Calu3 (cell line): ENCODE measurements at regions of chr6 and their contacts with region 1.

Region 1: GRCh38 chr6:22972771-22973170 is 403.4 kb downstream of the HDGFL1 start:
- DNase-seq: no peak
- H3K4me3 Mint-ChIP-seq: no peak overlapping the region
- H3K27ac Mint-ChIP-seq: no peak overlapping the region
- H3K4me1 Mint-ChIP-seq: no peaks in the 10 kb centered on the region
- H3K27me3 Mint-ChIP-seq: no peaks in the 10 kb centered on the region
- CTCF ChIP-seq: no peak

Region 2: GRCh38 chr6:22880686-22881433 is 91.9 kb before region 1 on chr6:
- CTCF ChIA-PET with region 1: no interaction called
- intact Hi-C with region 1: no loop called
- DNase-seq: peak; percentile 51
- H3K4me3 Mint-ChIP-seq: peak overlapping the region; percentile 24
- H3K27ac Mint-ChIP-seq: peak overlapping the region; percentile 95
- H3K4me1 Mint-ChIP-seq: peaks cover 61% of the 10 kb centered on the region
- H3K27me3 Mint-ChIP-seq: no peaks in the 10 kb centered on the region
- CTCF ChIP-seq: no peak

Region 3: DNA sequence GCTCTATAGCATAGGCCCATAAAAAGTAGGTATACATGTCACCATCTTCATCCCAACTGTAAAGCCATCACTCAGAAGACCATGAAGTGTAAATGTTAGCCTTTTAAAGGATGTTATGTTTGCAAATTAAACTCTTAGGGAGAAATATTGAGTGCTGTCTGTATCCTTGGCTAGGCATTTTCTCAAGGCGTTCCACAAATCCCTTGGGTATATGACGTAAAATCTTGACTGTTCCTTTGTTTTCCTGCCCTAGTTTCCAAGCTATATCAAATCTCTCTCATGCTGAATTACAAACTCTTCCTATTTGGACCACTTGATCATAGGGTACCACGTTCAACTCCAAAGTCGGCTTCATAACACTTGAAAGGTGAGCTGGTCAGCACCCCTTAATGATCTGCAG is 82.8 kb after region 1 on chr6:
- CTCF ChIA-PET with region 1: no interaction called
- intact Hi-C with region 1: loop called (anchors 2 kb)
- DNase-seq: no peak
- H3K4me3 Mint-ChIP-seq: no peak overlapping the region
- H3K27ac Mint-ChIP-seq: no peak overlapping the region
- H3K4me1 Mint-ChIP-seq: no peaks in the 10 kb centered on the region
- H3K27me3 Mint-ChIP-seq: no peaks in the 10 kb centered on the region
- CTCF ChIP-seq: no peak